ENCODE measurements at regions of chr7 and their contacts with region 1.

Region 1: GRCh38 chr7:22404421-22405023 is 47.6 kb upstream of the RAPGEF5 start:
- DNase-seq: no peak
- ATAC-seq: no peak
- H3K4me3 ChIP-seq: no peak overlapping the region
- H3K4me3 Mint-ChIP-seq: no peak overlapping the region
- H3K27ac ChIP-seq: no peak overlapping the region
- H3K27ac Mint-ChIP-seq: no peak overlapping the region
- H3K4me1 ChIP-seq: peaks cover 10% of the 10 kb centered on the region in 2 donors
- H3K4me1 Mint-ChIP-seq: peaks cover 21% of the 10 kb centered on the region
- H3K27me3 ChIP-seq: no peaks in the 10 kb centered on the region
- H3K27me3 Mint-ChIP-seq: no peaks in the 10 kb centered on the region
- CTCF ChIP-seq: no peak

Region 2: DNA sequence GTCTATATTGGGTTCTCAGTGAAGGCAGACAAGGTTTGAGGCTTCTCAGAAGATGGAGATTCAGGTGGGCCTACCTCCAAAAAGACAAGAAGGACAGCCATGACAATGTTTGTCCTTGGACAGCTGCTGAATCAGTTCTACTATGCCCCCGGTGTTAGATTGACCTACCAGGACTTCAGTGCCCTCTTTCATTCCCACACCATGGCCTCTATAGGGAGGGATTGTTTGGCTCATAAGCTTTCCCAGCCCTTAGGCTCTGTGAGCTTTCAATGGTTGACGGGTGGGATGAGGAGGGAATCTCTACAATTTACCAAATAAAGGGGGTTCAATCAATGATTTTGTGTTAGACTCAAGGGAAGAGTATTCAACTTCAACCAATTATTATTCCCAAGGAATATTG is 24.2 kb before region 1 on chr7:
- CTCF ChIA-PET with region 1: no interaction called
- POLR2A ChIA-PET with region 1: no interaction called
- intact Hi-C with region 1: loop called (anchors 1 kb)
- DNase-seq: no peak
- ATAC-seq: no peak
- H3K4me3 ChIP-seq: no peak overlapping the region
- H3K4me3 Mint-ChIP-seq: no peak overlapping the region
- H3K27ac ChIP-seq: no peak overlapping the region
- H3K27ac Mint-ChIP-seq: peak overlapping the region; percentile 3
- H3K4me1 ChIP-seq: no peaks in the 10 kb centered on the region
- H3K4me1 Mint-ChIP-seq: peaks cover 1% of the 10 kb centered on the region
- H3K27me3 ChIP-seq: no peaks in the 10 kb centered on the region
- H3K27me3 Mint-ChIP-seq: peaks cover 30% of the 10 kb centered on the region
- CTCF ChIP-seq: no peak

Region 3: DNA sequence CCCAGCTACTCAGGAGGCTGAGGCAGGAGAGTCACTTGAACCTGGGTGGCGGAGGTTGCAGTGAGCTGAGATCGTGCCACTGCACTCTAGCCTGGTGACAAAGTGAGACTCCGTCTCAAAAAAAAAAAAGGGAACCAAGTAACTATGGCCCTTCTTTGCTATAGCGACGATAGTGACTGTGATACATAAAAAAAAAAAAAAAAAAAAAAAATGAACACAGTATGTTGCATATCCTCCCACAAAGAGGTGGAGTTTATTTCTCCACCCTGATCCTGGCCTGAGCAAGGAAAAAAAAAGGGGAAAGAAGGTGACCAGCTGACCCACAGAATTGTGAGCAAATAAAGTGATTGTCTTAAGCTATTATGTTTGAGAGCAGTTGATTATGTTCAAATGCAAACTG is 137.7 kb after region 1 on chr7:
- CTCF ChIA-PET with region 1: no interaction called
- POLR2A ChIA-PET with region 1: no interaction called
- intact Hi-C with region 1: no loop called
- DNase-seq: no peak
- ATAC-seq: no peak
- H3K4me3 ChIP-seq: no peak overlapping the region
- H3K4me3 Mint-ChIP-seq: no peak overlapping the region
- H3K27ac ChIP-seq: no peak overlapping the region
- H3K27ac Mint-ChIP-seq: no peak overlapping the region
- H3K4me1 ChIP-seq: no peaks in the 10 kb centered on the region
- H3K4me1 Mint-ChIP-seq: no peaks in the 10 kb centered on the region
- H3K27me3 ChIP-seq: no peaks in the 10 kb centered on the region
- H3K27me3 Mint-ChIP-seq: peaks cover 4% of the 10 kb centered on the region
- CTCF ChIP-seq: no peak

Region 4: DNA sequence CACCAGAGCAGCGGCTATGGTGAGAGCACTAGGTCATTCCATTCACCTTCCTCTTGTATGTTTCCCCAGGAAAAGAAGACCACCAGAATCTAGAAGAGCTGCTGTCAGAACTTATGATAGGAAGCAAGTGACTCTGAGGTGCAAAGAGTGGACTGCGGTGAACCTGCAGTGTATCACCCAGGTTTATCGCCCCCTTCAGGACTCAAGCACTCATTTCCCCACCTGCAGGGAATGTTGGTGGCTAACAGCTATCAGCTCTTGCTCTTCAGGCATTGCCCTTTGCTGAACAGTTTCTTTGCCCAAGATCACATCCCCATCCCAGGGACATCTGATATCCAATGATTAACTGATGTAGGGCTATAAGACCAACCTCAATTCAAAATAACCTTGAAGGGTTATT is 256.2 kb after region 1 on chr7:
- CTCF ChIA-PET with region 1: no interaction called
- POLR2A ChIA-PET with region 1: no interaction called
- intact Hi-C with region 1: no loop called
- DNase-seq: peak; percentile 56
- ATAC-seq: no peak
- H3K4me3 ChIP-seq: peak overlapping the region; percentile 38 to 56 (median 44)
- H3K4me3 Mint-ChIP-seq: peak overlapping the region; percentile 71
- H3K27ac ChIP-seq: peak overlapping the region; percentile 99 to 100
- H3K27ac Mint-ChIP-seq: peak overlapping the region; percentile 92
- H3K4me1 ChIP-seq: peaks cover 79 to 84% of the 10 kb centered on the region in 2 donors
- H3K4me1 Mint-ChIP-seq: peaks cover 78% of the 10 kb centered on the region
- H3K27me3 ChIP-seq: no peaks in the 10 kb centered on the region
- H3K27me3 Mint-ChIP-seq: no peaks in the 10 kb centered on the region
- CTCF ChIP-seq: peak; percentile 51